ENCODE measurements at regions of chr10 and their contacts with region 1.

Region 1: GRCh38 chr10:4470231-4470835 is 355.7 kb upstream of the AKR1E2 start:
- DNase-seq: peak; percentile 17 to 59
- H3K4me3 ChIP-seq: no peak overlapping the region
- H3K27ac ChIP-seq: no peak overlapping the region
- H3K4me1 ChIP-seq: 0 out of 2 replicates have a peak, but pooled peaks cover 9% of the 10 kb centered on the region
- H3K27me3 ChIP-seq: no peaks in the 10 kb centered on the region
- CTCF ChIP-seq: no peak

Region 2: GRCh38 chr10:4353964-4354363 is 116.4 kb before region 1 on chr10:
- CTCF ChIA-PET with region 1: no interaction called
- POLR2A ChIA-PET with region 1: interaction called, 6 read pairs
- intact Hi-C with region 1: loop called (anchors 1 kb)
- DNase-seq: peak in 1 of 2 experiments; percentile 59
- H3K4me3 ChIP-seq: no peak overlapping the region
- H3K27ac ChIP-seq: peak overlapping the region; percentile 76
- H3K4me1 ChIP-seq: peaks cover 18% of the 10 kb centered on the region
- H3K27me3 ChIP-seq: no peaks in the 10 kb centered on the region
- CTCF ChIP-seq: no peak

Region 3: GRCh38 chr10:4541292-4541691 is 71.0 kb after region 1 on chr10:
- CTCF ChIA-PET with region 1: no interaction called
- POLR2A ChIA-PET with region 1: no interaction called
- intact Hi-C with region 1: loop called (anchors 1 kb)
- DNase-seq: peak; percentile 58 to 80
- H3K4me3 ChIP-seq: no peak overlapping the region
- H3K27ac ChIP-seq: peak overlapping the region; percentile 60
- H3K4me1 ChIP-seq: peaks cover 10% of the 10 kb centered on the region
- H3K27me3 ChIP-seq: no peaks in the 10 kb centered on the region
- CTCF ChIP-seq: no peak